ENCODE measurements at regions of chr5 and their contacts with region 1.

Region 1: DNA sequence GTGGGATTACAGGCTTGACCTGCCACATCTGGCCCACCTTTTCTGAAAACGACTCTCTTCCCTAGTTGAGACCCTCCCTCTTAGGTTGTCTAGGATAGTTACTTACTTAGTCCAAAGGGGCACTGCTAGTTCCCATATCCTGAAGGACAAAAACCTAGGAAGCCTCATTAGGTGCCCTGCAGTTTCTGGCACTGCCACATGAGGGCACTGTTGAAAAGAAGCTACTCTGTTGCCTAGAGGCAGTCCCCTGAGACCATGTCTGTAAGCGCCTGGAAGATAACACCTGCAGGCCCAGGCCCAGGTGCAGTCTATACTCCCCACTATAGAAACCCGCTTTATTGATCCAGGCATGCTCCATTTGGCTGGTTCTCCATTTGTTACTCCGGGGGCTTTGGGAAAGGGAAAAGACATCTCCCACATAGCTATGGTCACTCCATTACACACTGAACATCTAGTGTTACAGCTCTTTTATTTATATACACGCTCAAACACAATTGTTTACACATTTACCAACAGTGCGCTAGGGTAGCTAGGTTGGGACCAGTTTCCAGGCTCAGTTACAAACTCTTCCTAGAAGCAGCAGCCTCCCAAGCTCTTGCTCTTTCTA is 73.4 kb upstream of the PPARGC1B start:
- DNase-seq: peak; percentile 67 to 71
- H3K4me3 ChIP-seq: no peak overlapping the region
- H3K4me3 Mint-ChIP-seq: no peak overlapping the region
- H3K27ac Mint-ChIP-seq: no peak overlapping the region
- H3K4me1 ChIP-seq: no peaks in the 10 kb centered on the region
- H3K4me1 Mint-ChIP-seq: no peaks in the 10 kb centered on the region
- H3K27me3 ChIP-seq: no peaks in the 10 kb centered on the region
- H3K27me3 Mint-ChIP-seq: no peaks in the 10 kb centered on the region
- CTCF ChIP-seq: peak; percentile 82 to 85

Region 2: DNA sequence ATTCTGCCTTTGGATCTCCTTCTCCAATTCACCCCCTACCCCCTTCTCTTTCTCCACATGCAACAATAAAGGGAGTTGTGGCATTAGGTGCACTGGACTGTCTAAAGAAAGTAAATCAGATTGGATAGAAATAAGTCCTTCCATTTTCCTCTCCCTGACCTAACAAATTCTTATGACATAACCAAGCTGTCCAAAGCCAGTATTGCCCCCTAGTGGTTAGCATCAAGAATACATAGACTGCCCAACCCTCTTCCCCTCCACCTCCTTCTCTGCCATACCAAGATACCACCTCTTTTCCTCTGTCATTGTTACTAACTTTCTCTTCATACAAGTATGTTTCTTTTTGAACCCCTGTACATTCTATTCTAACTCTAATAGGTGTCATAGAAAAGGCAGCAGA is 119.1 kb after region 1 on chr5:
- CTCF ChIA-PET with region 1: interaction called, 4 read pairs
- POLR2A ChIA-PET with region 1: no interaction called
- intact Hi-C with region 1: loop called (anchors 5 kb)
- DNase-seq: peak in 1 of 2 experiments; percentile 21
- H3K4me3 ChIP-seq: no peak overlapping the region
- H3K4me3 Mint-ChIP-seq: no peak overlapping the region
- H3K27ac Mint-ChIP-seq: no peak overlapping the region
- H3K4me1 ChIP-seq: peaks cover 9% of the 10 kb centered on the region; the same call in 1 of the 2 replicates
- H3K4me1 Mint-ChIP-seq: peaks cover 21% of the 10 kb centered on the region
- H3K27me3 ChIP-seq: no peaks in the 10 kb centered on the region
- H3K27me3 Mint-ChIP-seq: no peaks in the 10 kb centered on the region
- CTCF ChIP-seq: peak; percentile 14 to 30

Region 3: DNA sequence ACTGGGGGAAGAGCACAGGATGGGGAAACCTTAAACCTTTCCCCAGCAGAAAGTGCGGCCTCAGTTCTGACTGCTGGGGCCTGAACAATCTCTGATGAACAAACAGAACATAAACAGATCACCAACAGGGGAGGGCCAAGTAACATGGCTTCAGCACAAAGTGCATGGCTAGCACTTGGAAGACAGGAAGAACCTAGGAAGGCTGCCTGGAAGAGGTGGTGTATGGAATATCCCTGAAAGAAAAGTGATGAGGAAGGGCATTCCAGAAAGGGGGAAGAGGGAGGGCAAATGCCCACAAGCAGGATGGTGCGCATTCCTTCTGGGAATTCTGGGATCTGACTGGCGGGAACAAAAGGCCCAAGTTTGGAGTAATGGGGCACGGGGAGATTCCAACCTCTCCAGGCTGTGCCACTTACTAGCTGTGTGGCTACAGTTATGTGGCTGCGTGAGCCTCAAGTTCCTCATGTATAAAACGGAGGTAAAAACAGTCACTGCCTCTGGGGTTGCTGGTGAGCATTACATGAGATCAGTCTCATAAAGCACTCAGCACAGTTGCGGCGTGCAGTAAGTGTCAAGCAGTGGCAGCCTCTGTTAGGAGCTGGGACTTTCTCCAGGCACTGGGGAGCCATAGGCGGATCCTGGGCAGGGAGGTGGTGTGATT is 497.4 kb after region 1 on chr5:
- CTCF ChIA-PET with region 1: no interaction called
- POLR2A ChIA-PET with region 1: no interaction called
- intact Hi-C with region 1: no loop called
- DNase-seq: no peak
- H3K4me3 ChIP-seq: no peak overlapping the region
- H3K4me3 Mint-ChIP-seq: no peak overlapping the region
- H3K27ac Mint-ChIP-seq: peak overlapping the region; percentile 60
- H3K4me1 ChIP-seq: peaks cover 9% of the 10 kb centered on the region; the same call in 1 of the 2 replicates
- H3K4me1 Mint-ChIP-seq: peaks cover 14% of the 10 kb centered on the region
- H3K27me3 ChIP-seq: no peaks in the 10 kb centered on the region
- H3K27me3 Mint-ChIP-seq: no peaks in the 10 kb centered on the region
- CTCF ChIP-seq: no peak